ENCODE measurements at regions of chr22 and their contacts with region 1.

Region 1: DNA sequence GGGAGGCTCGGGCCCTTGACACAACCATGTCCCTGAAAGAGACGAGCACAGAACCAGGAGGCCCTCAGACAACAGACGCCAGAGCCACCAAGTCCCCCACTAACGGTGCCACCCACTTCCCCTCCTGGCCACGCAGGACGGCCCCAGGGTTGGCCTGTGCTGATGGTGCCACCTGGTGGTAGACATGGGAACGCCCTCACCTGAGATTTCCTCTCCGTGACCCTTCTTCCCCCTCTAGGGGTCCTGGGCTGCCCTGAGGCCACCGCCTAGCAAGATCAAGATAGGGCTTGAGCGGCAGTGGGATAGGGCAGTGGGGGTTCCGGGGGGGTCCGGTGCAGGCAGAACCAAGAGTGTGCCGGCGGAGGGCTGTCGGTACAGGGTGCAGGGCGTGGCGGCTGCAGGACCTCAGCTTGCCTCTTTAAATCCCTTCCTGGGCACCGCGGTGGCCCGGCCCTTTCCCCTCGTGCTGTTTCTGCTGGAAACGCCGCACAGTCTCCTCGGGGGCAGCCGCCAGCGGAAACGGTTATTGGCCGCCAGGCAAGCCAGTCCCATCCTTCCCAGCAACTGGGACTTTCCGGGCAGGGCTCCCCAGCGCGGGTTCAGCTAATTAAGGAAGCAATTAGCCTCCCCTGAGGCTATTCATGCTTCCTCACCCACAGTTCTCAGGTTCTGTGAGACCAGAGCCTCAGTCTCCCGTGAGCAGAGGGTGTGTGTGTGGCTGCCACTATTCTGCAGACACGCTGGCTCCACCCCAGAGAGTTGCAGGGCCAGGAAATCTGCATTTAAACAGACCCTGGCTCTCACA is 5.5 kb upstream of the NFAM1 start:
- DNase-seq: peak; percentile 84
- H3K4me3 ChIP-seq: peak overlapping the region; percentile 62
- H3K27ac ChIP-seq: peak overlapping the region; percentile 55
- H3K4me1 ChIP-seq: no peaks in the 10 kb centered on the region
- H3K27me3 ChIP-seq: no peaks in the 10 kb centered on the region
- CTCF ChIP-seq: peak; percentile 92

Region 2: GRCh38 chr22:41976401-41976901 is 461.2 kb before region 1 on chr22:
- intact Hi-C with region 1: loop called (anchors 10 kb)
- DNase-seq: peak; percentile 38
- H3K4me3 ChIP-seq: peak overlapping the region; percentile 41
- H3K27ac ChIP-seq: no peak overlapping the region
- H3K4me1 ChIP-seq: no peaks in the 10 kb centered on the region
- H3K27me3 ChIP-seq: peaks cover 27% of the 10 kb centered on the region
- CTCF ChIP-seq: no peak

Region 3: DNA sequence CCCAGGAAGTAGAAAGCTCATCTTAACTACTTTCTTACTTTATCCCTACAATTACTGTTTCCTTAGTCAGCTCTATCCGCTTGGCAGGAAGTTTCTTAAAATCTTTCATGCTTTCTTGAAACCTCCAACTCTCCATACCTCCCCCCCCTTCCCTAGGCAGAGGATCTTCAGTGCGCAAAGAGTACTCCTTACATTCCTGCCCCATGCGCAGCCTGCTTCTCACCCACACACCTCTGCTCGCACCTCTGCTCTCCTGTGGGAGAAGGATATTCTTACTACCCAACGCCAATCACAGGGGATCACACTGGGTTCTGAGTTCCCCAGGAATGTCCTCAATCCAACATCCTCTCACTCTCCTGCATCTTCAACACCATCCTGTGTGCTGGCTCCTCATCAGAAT is 179.6 kb before region 1 on chr22:
- intact Hi-C with region 1: no loop called
- DNase-seq: no peak
- H3K4me3 ChIP-seq: no peak overlapping the region
- H3K27ac ChIP-seq: no peak overlapping the region
- H3K4me1 ChIP-seq: no peaks in the 10 kb centered on the region
- H3K27me3 ChIP-seq: no peaks in the 10 kb centered on the region
- CTCF ChIP-seq: no peak